ENCODE measurements at regions of chr16 and their contacts with region 1.

Region 1: GRCh38 chr16:81610144-81610842 is 165.7 kb downstream of the CMIP start:
- DNase-seq: peak; percentile 72 to 84
- ATAC-seq: peak; percentile 63 to 85 (median 72)
- H3K4me3 ChIP-seq: peak overlapping the region in 6 of 10 donors; percentile 6 to 35 (median 30)
- H3K27ac ChIP-seq: peak overlapping the region in 7 of 10 donors; percentile 2 to 86 (median 76)
- H3K4me1 ChIP-seq: peaks cover 10 to 69% (median 56%) of the 10 kb centered on the region in 9 donors
- H3K27me3 ChIP-seq: no peaks in the 10 kb centered on the region
- CTCF ChIP-seq: no peak

Region 2: DNA sequence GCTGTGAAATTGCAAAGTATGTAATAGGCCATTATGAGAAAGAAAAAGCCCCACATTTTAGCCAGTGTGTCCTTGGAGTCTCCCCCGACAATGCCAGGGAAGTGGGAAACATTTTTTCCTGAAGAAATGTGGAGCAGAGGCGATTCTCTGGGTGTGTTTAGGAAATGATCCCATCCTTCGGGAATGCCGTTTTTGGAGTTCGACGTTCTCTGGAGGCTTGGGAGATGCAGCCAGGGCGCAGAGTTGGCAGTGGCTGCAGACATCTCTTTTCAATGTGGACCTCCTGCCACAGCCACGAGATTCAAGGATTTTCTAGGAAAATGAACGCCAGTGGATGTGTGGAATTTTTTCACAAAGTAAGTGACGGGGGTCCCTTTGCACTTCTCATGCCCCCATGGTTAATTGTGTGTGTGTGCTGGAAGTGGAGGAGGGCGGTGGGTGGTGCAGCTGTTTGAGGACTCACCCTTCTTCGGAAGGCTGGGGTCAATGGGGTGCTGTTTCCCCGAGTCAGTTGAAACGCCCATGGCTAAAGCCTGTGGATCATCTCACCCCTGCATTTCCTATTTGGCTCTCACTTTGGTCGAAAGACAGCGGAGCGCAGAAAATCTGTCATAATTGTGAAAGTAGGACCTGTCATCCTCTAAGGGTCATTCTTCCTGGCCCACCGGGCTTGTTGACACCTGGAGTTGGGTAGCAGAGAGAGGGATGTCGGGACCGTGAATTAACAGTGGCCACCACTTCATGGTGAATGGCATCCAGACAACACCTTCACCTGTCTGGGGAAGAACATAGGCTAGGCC is 92.5 kb before region 1 on chr16:
- intact Hi-C with region 1: loop called in 1 of 10 experiments (anchors 1 kb)
- DNase-seq: no peak
- ATAC-seq: peak in 3 of 8 donors; percentile 8 to 29 (median 28)
- H3K4me3 ChIP-seq: peak overlapping the region in 1 of 10 donors; percentile 18
- H3K27ac ChIP-seq: peak overlapping the region in 8 of 10 donors; percentile 25 to 77 (median 46)
- H3K4me1 ChIP-seq: peaks cover 0 to 72% (median 57%) of the 10 kb centered on the region in 9 donors
- H3K27me3 ChIP-seq: no peaks in the 10 kb centered on the region
- CTCF ChIP-seq: no peak

Region 3: GRCh38 chr16:81551151-81551808 is 59.0 kb before region 1 on chr16:
- intact Hi-C with region 1: loop called in 1 of 10 experiments (anchors 5 kb)
- DNase-seq: no peak
- ATAC-seq: peak; percentile 14 to 55 (median 34)
- H3K4me3 ChIP-seq: no peak overlapping the region
- H3K27ac ChIP-seq: peak overlapping the region in 6 of 10 donors; percentile 27 to 80 (median 60)
- H3K4me1 ChIP-seq: peaks cover 16 to 91% (median 64%) of the 10 kb centered on the region in 9 donors
- H3K27me3 ChIP-seq: no peaks in the 10 kb centered on the region
- CTCF ChIP-seq: no peak